ENCODE measurements at regions of chr14 and their contacts with region 1.

Region 1: DNA sequence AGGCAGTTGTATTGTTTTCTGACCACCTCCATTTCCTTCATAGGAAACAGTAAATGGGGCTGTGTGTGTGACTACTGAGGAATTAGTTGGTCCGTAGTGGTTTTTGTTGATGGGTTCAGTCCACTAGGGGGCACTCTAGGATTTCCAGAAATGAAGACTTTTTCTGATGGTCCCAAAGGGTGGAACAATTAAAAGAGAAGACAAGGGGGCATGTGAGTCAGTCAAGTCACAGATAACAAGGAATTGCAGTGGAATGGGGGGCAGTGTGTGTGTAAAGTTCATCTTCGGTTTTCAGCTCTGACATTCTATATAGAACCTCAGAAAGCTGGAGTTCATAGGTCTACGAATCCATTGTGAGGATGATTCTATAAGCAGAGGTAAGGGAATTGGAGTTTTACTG is 186.6 kb upstream of the OR4E1 start:
- DNase-seq: peak; percentile 58
- H3K4me3 ChIP-seq: no peak overlapping the region
- H3K27ac ChIP-seq: no peak overlapping the region
- H3K4me1 ChIP-seq: no peaks in the 10 kb centered on the region
- H3K27me3 ChIP-seq: peaks cover 11 to 12% of the 10 kb centered on the region in 2 experiments
- CTCF ChIP-seq: peak; percentile 48 to 61
- POLR2A ChIP-seq: no peak

Region 2: DNA sequence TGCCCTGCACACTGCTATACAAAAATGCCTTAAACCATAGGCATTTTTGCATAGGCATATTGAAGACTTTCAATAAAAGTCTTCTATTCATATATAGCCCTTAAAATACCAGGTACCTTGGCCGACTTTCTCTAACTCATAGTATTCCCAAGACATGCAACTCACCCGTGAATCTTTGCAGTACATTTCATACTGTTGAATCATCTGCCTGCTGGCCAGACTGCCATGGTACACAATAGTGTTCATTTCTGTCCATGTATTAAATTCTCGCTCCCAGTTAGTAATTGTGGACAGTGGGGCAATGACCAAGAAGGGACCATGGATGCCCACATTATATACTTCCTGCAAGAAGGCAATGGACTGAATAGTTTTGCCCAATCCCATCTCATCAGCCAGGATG is 452.0 kb before region 1 on chr14:
- CTCF ChIA-PET with region 1: no interaction called
- POLR2A ChIA-PET with region 1: no interaction called
- dilution Hi-C with region 1: no loop called
- intact Hi-C with region 1: no loop called
- DNase-seq: no peak
- H3K4me3 ChIP-seq: no peak overlapping the region
- H3K27ac ChIP-seq: no peak overlapping the region
- H3K4me1 ChIP-seq: peaks cover 13% of the 10 kb centered on the region
- H3K27me3 ChIP-seq: no peaks in the 10 kb centered on the region
- CTCF ChIP-seq: no peak
- POLR2A ChIP-seq: no peak

Region 3: DNA sequence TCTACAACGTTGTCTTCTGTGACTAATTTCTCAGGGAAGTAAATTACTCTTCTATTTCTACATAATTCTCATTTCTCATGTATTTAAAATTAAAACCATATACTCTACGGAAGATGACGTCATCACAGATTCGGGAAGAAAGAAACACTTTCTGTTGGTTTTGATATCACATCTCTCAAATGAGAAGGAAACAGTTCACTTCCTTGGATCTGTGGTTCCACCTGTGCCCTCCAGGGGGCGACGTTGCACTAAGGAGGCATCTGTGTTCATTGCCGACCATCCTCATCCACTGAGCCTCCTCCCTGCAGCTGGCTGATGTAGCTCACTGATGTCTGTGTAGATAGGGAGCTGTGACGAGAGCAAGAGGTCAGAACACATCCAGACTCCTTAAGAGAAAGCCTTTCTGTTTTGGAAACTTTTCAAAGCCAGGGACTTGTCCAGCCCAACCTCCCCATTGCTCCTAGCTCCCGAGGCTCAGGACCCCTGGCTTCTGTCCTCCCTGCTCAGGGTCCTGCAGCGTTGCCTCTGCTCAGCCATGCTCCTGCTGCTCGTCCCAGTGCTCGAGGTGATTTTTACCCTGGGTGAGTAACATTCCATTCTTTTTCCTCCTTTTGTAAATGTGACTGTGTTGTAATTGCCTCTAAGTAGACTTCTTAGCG is 13.8 kb before region 1 on chr14:
- CTCF ChIA-PET with region 1: interaction called, 31 read pairs
- POLR2A ChIA-PET with region 1: no interaction called
- dilution Hi-C with region 1: no loop called
- intact Hi-C with region 1: no loop called
- DNase-seq: peak; percentile 13
- H3K4me3 ChIP-seq: no peak overlapping the region
- H3K27ac ChIP-seq: no peak overlapping the region
- H3K4me1 ChIP-seq: no peaks in the 10 kb centered on the region
- H3K27me3 ChIP-seq: peaks cover 20 to 61% of the 10 kb centered on the region in 2 experiments
- CTCF ChIP-seq: peak; percentile 71 to 76
- POLR2A ChIP-seq: no peak

Region 4: GRCh38 chr14:21933681-21934080 is 73.5 kb after region 1 on chr14:
- CTCF ChIA-PET with region 1: interaction called, 10 read pairs
- POLR2A ChIA-PET with region 1: no interaction called
- dilution Hi-C with region 1: no loop called
- intact Hi-C with region 1: loop called (anchors 1 kb)
- DNase-seq: peak; percentile 53
- H3K4me3 ChIP-seq: no peak overlapping the region
- H3K27ac ChIP-seq: no peak overlapping the region
- H3K4me1 ChIP-seq: no peaks in the 10 kb centered on the region
- H3K27me3 ChIP-seq: no peaks in the 10 kb centered on the region
- CTCF ChIP-seq: peak; percentile 35 to 52
- POLR2A ChIP-seq: no peak

Measured in endothelial cell of umbilical vein (primary cell).